Naive thymus-derived CD4-positive, alpha-beta T cell (primary cell): ENCODE measurements at regions of chr15 and their contacts with region 1.

Region 1: DNA sequence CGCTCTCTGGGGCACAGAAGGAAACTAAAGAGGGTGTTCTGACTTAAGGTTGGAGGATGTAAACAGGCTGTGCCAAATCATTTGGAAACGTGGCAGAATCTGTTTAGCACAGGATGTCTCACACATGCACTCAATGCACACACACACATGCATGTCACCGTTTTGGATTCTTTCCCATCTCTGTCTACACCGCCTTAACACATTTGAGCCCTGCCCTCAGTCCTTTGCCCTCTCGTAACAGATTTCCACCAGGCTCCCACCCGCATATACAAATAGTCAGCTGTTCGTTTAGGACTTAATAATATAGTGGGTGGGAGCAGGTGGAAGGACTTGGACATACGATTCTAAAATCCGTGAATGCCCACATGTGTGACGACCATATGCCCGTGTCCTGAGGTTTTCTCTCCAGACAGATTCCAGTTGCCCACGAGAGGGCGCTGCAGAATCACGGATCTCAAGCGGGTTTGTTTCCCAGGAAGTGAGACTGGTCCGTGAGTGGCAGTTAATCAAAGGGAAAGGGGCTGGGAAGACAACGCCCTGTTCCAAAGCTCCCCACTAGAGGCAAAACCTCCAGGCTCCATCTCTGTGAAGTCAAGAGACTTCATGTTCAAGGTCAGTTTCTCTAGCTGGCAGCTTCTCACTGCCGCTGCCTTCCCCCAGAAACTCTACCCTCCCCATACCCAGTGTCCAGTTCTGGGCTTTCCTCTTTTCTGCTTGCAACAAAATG is 44.5 kb downstream of the NOX5 start:
- DNase-seq: peak; percentile 29 to 69 (median 59)
- ATAC-seq: peak; percentile 66
- H3K4me3 ChIP-seq: no peak overlapping the region
- H3K4me3 Mint-ChIP-seq: peak overlapping the region in 5 of 10 donors; percentile 21 to 61 (median 52)
- H3K27ac ChIP-seq: no peak overlapping the region
- H3K27ac Mint-ChIP-seq: peak overlapping the region in 4 of 9 donors; percentile 30 to 78 (median 58)
- H3K4me1 ChIP-seq: peaks cover 7 to 23% of the 10 kb centered on the region in 2 donors
- H3K4me1 Mint-ChIP-seq: peaks cover 5 to 38% (median 33%) of the 10 kb centered on the region in 7 donors
- H3K27me3 ChIP-seq: no peaks in the 10 kb centered on the region
- H3K27me3 Mint-ChIP-seq: peaks cover 0 to 18% (median 5%) of the 10 kb centered on the region in 5 donors

Region 2: DNA sequence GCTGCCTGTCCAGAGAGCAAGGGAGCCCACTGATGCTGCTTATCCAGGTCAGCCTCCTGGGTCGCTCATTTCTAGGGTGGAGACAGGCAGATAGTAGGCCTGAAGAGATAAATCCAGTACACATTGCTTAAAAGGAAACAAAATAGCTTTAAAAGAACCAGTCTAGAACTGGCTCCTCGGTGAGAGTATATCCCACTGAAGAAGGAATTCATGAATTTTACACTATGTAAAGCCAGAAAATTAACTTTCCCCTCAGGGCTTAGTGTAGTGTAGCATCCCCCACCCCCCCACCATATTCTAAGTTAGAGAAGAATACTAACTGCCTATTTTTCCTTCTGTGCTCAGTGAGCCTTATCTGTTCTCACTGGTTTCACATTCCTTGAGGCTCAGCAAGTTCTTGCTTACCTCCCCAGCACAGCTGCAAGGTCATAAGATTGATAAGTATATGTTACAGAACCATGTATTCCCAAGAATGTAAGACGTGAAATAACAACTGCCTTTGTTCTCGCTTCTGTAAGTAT is 75.0 kb before region 1 on chr15:
- CTCF ChIA-PET with region 1: no interaction called
- POLR2A ChIA-PET with region 1: no interaction called
- intact Hi-C with region 1: no loop called
- DNase-seq: no peak
- ATAC-seq: no peak
- H3K4me3 ChIP-seq: no peak overlapping the region
- H3K4me3 Mint-ChIP-seq: no peak overlapping the region
- H3K27ac ChIP-seq: no peak overlapping the region
- H3K27ac Mint-ChIP-seq: no peak overlapping the region
- H3K4me1 ChIP-seq: no peaks in the 10 kb centered on the region
- H3K4me1 Mint-ChIP-seq: no peaks in the 10 kb centered on the region
- H3K27me3 ChIP-seq: no peaks in the 10 kb centered on the region
- H3K27me3 Mint-ChIP-seq: peaks cover 2 to 39% (median 16%) of the 10 kb centered on the region in 5 donors

Region 3: DNA sequence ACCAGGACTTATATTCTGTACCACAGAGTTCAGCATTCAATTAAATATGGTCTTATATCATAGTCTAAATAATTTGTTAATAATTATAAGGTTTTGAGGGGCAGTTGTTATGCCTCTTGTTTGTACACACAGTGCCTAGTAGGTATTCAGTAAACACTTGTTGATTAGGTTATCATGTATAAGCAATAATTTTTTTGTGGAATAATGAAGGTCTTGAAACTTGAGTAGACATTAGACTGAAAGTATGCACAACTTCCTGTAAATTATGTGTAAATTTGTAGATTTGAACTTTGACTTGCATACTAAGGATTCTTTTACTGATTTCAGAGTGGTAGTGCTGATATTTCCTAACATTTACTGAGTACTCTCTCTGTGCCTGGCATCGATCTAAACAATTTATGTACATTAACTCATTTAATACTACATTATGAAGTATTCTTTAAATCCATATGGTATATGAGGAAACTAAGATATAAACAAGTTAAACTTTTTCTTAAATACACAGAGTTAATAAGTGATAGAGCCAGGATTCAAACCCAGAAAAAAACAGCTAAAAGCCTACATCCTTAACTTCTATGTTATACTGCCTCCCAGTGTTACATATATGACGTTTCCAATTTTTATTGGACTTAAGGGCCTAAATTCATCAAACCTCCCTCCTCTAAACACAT is 166.5 kb after region 1 on chr15:
- CTCF ChIA-PET with region 1: no interaction called
- POLR2A ChIA-PET with region 1: no interaction called
- intact Hi-C with region 1: loop called (anchors 1 kb)
- DNase-seq: no peak
- ATAC-seq: no peak
- H3K4me3 ChIP-seq: no peak overlapping the region
- H3K4me3 Mint-ChIP-seq: no peak overlapping the region
- H3K27ac ChIP-seq: no peak overlapping the region
- H3K27ac Mint-ChIP-seq: no peak overlapping the region
- H3K4me1 ChIP-seq: no peaks in the 10 kb centered on the region
- H3K4me1 Mint-ChIP-seq: no peaks in the 10 kb centered on the region
- H3K27me3 ChIP-seq: no peaks in the 10 kb centered on the region
- H3K27me3 Mint-ChIP-seq: peaks cover 0 to 4% (median 0%) of the 10 kb centered on the region in 5 donors

Region 4: GRCh38 chr15:69265347-69265955 is 206.5 kb after region 1 on chr15:
- CTCF ChIA-PET with region 1: interaction called, 4 read pairs
- POLR2A ChIA-PET with region 1: no interaction called
- intact Hi-C with region 1: loop called in 1 of 2 experiments (anchors 1 kb)
- DNase-seq: peak in 5 of 9 donors; percentile 3 to 7 (median 4)
- ATAC-seq: no peak
- H3K4me3 ChIP-seq: no peak overlapping the region
- H3K4me3 Mint-ChIP-seq: no peak overlapping the region
- H3K27ac ChIP-seq: no peak overlapping the region
- H3K27ac Mint-ChIP-seq: no peak overlapping the region
- H3K4me1 ChIP-seq: no peaks in the 10 kb centered on the region
- H3K4me1 Mint-ChIP-seq: no peaks in the 10 kb centered on the region
- H3K27me3 ChIP-seq: no peaks in the 10 kb centered on the region
- H3K27me3 Mint-ChIP-seq: peaks cover 0 to 3% (median 0%) of the 10 kb centered on the region in 5 donors

Region 5: GRCh38 chr15:69394556-69395282 is 335.7 kb after region 1 on chr15:
- CTCF ChIA-PET with region 1: interaction called, 51 read pairs
- POLR2A ChIA-PET with region 1: no interaction called
- intact Hi-C with region 1: loop called in 1 of 2 experiments (anchors 1 kb)
- DNase-seq: peak; percentile 44 to 86 (median 71)
- ATAC-seq: peak; percentile 97
- H3K4me3 ChIP-seq: no peak overlapping the region
- H3K4me3 Mint-ChIP-seq: no peak overlapping the region
- H3K27ac ChIP-seq: no peak overlapping the region
- H3K27ac Mint-ChIP-seq: peak overlapping the region in 1 of 9 donors; percentile 6
- H3K4me1 ChIP-seq: no peaks in the 10 kb centered on the region
- H3K4me1 Mint-ChIP-seq: peaks cover 6 to 12% (median 7%) of the 10 kb centered on the region in 7 donors
- H3K27me3 ChIP-seq: no peaks in the 10 kb centered on the region
- H3K27me3 Mint-ChIP-seq: peaks cover 0 to 8% (median 0%) of the 10 kb centered on the region in 5 donors

Region 6: DNA sequence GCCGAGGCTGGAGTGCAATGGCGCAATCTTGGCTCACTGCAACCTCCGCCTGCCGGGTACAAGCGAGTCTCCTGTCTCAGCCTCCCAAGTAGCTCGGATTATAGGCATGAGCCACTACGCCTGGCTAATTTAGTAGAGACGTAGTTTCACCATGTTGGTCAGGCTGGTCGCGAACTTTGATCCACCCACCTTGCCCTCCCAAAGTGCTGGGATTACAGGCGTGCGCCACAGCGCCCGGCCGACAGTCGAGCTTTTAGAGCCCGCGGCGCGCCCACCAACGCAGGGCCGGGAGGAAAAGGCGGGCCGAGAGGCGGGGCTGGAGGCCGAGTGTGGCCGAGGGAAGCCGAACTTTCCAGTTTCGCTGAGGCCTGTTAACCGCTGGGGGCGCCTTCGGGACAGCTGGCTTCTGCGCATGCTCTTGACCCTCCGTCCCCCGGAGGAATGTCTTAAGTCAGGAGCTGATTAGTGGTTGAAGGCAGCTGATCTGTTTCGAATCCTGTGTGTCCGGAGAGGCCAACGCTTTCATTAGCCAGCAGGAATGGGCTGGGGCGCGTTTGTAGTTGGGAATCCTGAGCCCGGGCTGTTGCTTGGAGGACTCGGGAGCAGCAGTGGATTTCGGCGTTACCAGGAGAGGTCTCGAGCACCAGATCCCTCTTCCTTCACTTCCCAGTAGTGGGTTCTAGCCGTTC is 403.6 kb after region 1 on chr15:
- CTCF ChIA-PET with region 1: no interaction called
- POLR2A ChIA-PET with region 1: no interaction called
- intact Hi-C with region 1: loop called in 1 of 2 experiments (anchors 5 kb)
- DNase-seq: peak; percentile 84 to 90 (median 89)
- ATAC-seq: peak; percentile 99
- H3K4me3 ChIP-seq: peak overlapping the region; percentile 84
- H3K4me3 Mint-ChIP-seq: peak overlapping the region; percentile 87 to 95 (median 92)
- H3K27ac ChIP-seq: peak overlapping the region; percentile 91
- H3K27ac Mint-ChIP-seq: peak overlapping the region; percentile 79 to 97 (median 91)
- H3K4me1 ChIP-seq: peaks cover 10 to 17% of the 10 kb centered on the region in 2 donors
- H3K4me1 Mint-ChIP-seq: peaks cover 10 to 51% (median 37%) of the 10 kb centered on the region in 7 donors
- H3K27me3 ChIP-seq: no peaks in the 10 kb centered on the region
- H3K27me3 Mint-ChIP-seq: peaks cover 0 to 17% (median 0%) of the 10 kb centered on the region in 5 donors